Calu3 (cell line): ENCODE measurements at regions of chr1 and their contacts with region 1.

Region 1: GRCh38 chr1:234715252-234716014 is 105.5 kb upstream of the IRF2BP2 start:
- DNase-seq: no peak
- H3K4me3 Mint-ChIP-seq: no peak overlapping the region
- H3K27ac Mint-ChIP-seq: no peak overlapping the region
- H3K4me1 Mint-ChIP-seq: peaks cover 46% of the 10 kb centered on the region
- H3K27me3 Mint-ChIP-seq: no peaks in the 10 kb centered on the region
- CTCF ChIP-seq: no peak

Region 2: GRCh38 chr1:234836045-234836681 is 120.7 kb after region 1 on chr1:
- CTCF ChIA-PET with region 1: no interaction called
- intact Hi-C with region 1: no loop called
- DNase-seq: no peak
- H3K4me3 Mint-ChIP-seq: no peak overlapping the region
- H3K27ac Mint-ChIP-seq: no peak overlapping the region
- H3K4me1 Mint-ChIP-seq: peaks cover 14% of the 10 kb centered on the region
- H3K27me3 Mint-ChIP-seq: no peaks in the 10 kb centered on the region
- CTCF ChIP-seq: no peak

Region 3: GRCh38 chr1:234881893-234882771 is 166.7 kb after region 1 on chr1:
- CTCF ChIA-PET with region 1: interaction called, 11 read pairs
- intact Hi-C with region 1: no loop called
- DNase-seq: no peak
- H3K4me3 Mint-ChIP-seq: no peak overlapping the region
- H3K27ac Mint-ChIP-seq: no peak overlapping the region
- H3K4me1 Mint-ChIP-seq: peaks cover 16% of the 10 kb centered on the region
- H3K27me3 Mint-ChIP-seq: no peaks in the 10 kb centered on the region
- CTCF ChIP-seq: no peak